ENCODE measurements at regions of chr22 and their contacts with region 1.

Region 1: DNA sequence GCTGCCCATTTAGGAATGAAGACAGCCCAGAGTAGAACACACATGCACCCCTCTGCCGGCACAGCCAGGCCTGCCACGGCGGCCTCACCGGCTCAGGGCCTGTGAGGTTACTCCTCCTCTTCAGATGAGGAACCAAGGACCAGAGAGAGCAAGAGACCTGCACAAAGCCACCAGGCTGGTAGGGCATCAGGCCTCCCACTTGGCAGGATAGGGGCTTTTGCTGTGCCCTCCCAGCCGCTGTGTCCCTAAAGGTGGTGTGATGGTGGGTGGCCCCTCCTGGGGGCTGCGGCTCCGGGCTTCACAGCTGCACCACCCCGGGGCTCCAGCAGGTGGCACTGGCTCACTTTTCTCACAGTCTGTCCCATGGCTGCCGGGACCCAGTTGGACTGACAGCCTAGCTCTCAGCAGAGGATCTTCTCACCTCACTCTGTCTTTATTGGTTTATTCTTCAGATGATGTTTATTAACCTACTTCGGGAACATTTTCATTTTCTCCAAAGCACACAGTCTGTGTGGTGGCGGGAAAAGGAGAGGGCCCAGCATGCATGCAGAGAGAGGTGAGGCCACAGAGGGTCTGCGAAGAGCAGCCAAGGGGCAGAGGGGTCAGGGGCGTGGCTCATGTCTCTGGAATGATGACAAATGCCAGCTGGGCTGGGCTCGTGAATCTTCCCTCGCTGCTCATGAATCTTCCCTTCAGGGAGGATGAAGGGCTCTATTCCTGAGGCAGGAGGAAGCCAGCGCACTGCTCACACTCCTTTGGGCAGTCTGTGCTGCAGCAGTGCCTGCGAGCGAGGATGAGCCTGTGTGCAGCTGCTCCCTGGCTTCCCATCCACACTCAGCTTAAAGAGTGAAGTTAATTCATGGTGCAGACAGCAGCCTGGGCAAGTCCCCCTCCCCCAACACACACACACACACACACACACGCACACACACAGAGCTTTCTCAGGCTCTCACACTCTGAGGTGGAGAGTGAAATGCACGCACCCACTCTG is 101.1 kb upstream of the PITPNB start:
- DNase-seq: peak; percentile 34 to 97
- H3K4me3 ChIP-seq: no peak overlapping the region
- H3K27ac ChIP-seq: no peak overlapping the region
- H3K4me1 ChIP-seq: peaks cover 0 to 6% (median under 1%) of the 10 kb centered on the region in 4 experiments; a peak in 3 of 7 replicates
- H3K27me3 ChIP-seq: no peaks in the 10 kb centered on the region
- CTCF ChIP-seq: peak; percentile 85 to 92 (median 88)
- EP300 ChIP-seq: no peak
- POLR2A ChIP-seq: no peak
- RAD21 ChIP-seq: peak; percentile 87 to 93

Region 2: GRCh38 chr22:27962268-27963044 is 57.7 kb before region 1 on chr22:
- CTCF ChIA-PET with region 1: no interaction called
- POLR2A ChIA-PET with region 1: no interaction called
- DNase-seq: no peak
- H3K4me3 ChIP-seq: no peak overlapping the region
- H3K27ac ChIP-seq: no peak overlapping the region
- H3K4me1 ChIP-seq: peaks cover 0 to 4% (median 1%) of the 10 kb centered on the region in 4 experiments; a peak in 2 of 7 replicates
- H3K27me3 ChIP-seq: no peaks in the 10 kb centered on the region
- CTCF ChIP-seq: no peak
- EP300 ChIP-seq: no peak
- POLR2A ChIP-seq: no peak
- RAD21 ChIP-seq: no peak

Region 3: GRCh38 chr22:28442264-28442710 is 422.1 kb after region 1 on chr22:
- CTCF ChIA-PET with region 1: interaction called, 19 read pairs
- POLR2A ChIA-PET with region 1: interaction called, 3 read pairs
- DNase-seq: peak; percentile 69 to 85
- H3K4me3 ChIP-seq: peak overlapping the region; percentile 64 to 75 (median 72)
- H3K27ac ChIP-seq: no peak overlapping the region
- H3K4me1 ChIP-seq: peaks cover 0 to 3% (median 1%) of the 10 kb centered on the region in 4 experiments; a peak in 2 of 7 replicates
- H3K27me3 ChIP-seq: no peaks in the 10 kb centered on the region; a peak in 1 of 7 replicates
- CTCF ChIP-seq: peak; percentile 74 to 98 (median 77)
- EP300 ChIP-seq: peak in 1 of 2 experiments; percentile 38; a peak in 1 of 3 replicates
- POLR2A ChIP-seq: peak in 1 of 2 experiments; percentile 31; a peak in 1 of 3 replicates
- RAD21 ChIP-seq: peak; percentile 90 to 95

Region 4: DNA sequence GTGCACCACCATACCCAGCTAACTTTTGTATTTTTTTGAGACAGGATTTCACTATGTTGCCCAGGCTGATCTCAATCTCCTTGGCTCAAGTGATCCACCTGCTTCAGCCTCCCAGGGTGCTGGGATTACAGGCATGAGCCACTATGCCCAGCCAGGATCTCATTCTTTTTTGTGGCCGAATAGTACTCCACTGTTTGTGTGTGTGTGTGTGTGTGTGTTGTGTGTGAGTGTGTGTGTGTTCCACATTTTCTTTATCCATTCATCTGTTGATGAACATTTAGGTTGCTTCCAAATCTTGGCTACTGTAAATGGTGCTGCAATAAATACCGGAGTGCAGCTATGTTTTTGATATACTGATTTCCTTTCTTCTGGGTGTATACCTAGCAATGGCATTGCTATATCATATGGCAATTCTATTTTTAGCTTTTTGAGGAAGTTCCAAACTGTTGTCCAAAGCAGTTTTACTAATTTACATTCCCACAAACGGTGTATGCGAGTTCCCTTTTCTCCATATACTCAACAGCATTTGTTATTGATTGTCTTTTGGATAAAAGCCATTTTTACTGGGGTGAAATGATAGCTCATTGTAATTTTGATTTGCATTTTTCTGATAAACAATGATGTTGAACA is 554.1 kb after region 1 on chr22:
- CTCF ChIA-PET with region 1: interaction called, 11 read pairs
- POLR2A ChIA-PET with region 1: no interaction called
- DNase-seq: no peak
- H3K4me3 ChIP-seq: no peak overlapping the region
- H3K27ac ChIP-seq: no peak overlapping the region
- H3K4me1 ChIP-seq: no peaks in the 10 kb centered on the region
- H3K27me3 ChIP-seq: no peaks in the 10 kb centered on the region
- CTCF ChIP-seq: no peak
- EP300 ChIP-seq: no peak
- POLR2A ChIP-seq: no peak
- RAD21 ChIP-seq: no peak